CD4-positive, alpha-beta memory T cell (primary cell): ENCODE measurements at regions of chr3 and their contacts with region 1.

Region 1: DNA sequence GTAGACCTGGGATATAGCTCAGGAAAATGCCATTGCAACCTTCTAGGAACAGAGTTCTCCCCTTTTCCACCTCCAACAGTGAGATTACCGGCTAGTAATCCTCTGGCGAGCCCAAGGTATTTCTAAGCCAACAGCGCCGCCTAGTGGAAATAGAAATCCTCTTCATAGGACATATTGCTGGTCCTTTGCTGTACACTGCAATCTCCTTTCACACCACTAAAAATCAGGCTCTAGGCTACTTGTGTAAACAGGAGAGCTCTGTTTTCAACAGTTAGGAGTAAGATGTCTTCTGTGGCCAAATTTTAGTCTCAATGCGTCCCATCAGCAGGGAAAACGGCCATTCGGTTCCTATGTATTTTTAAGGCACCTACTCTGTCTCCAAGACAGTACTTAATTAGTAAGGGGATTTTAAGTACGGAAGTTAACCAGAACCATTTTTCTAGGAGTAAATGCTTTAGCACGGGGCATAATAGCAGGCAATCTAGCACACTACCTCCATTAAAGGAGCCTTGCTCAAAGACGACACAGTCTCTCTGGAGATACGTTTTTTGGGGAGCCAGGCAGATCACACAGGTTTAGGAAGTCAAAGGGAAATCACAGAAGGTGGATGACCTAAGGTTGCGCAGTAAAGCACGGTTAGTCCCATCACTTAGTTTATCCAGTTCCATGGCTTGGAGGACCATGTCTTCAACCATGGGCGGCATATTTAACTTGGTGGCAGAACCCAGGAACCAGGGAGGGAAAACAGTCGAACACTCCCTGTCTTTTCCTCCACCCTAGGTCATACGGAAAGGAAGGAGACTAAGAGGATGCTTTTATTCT is 43.8 kb downstream of the NCEH1 start:
- DNase-seq: peak; percentile 75 to 79 (median 78)
- H3K4me3 ChIP-seq: no peak overlapping the region
- H3K4me3 Mint-ChIP-seq: peak overlapping the region in 7 of 8 donors; percentile 11 to 64 (median 33)
- H3K27ac ChIP-seq: no peak overlapping the region
- H3K27ac Mint-ChIP-seq: peak overlapping the region in 4 of 7 donors; percentile 18 to 76 (median 53)
- H3K4me1 ChIP-seq: peaks cover 17% of the 10 kb centered on the region
- H3K4me1 Mint-ChIP-seq: peaks cover 10 to 31% (median 21%) of the 10 kb centered on the region in 4 donors
- H3K27me3 ChIP-seq: no peaks in the 10 kb centered on the region
- H3K27me3 Mint-ChIP-seq: peaks cover 1 to 2% of the 10 kb centered on the region in 2 donors

Region 2: GRCh38 chr3:171049861-171050444 is 1617.1 kb before region 1 on chr3:
- CTCF ChIA-PET with region 1: interaction called, 4 read pairs
- POLR2A ChIA-PET with region 1: no interaction called
- intact Hi-C with region 1: loop called (anchors 10 kb)
- DNase-seq: peak in 4 of 5 donors; percentile 17 to 37 (median 23)
- H3K4me3 ChIP-seq: no peak overlapping the region
- H3K4me3 Mint-ChIP-seq: no peak overlapping the region
- H3K27ac ChIP-seq: no peak overlapping the region
- H3K27ac Mint-ChIP-seq: no peak overlapping the region
- H3K4me1 ChIP-seq: no peaks in the 10 kb centered on the region
- H3K4me1 Mint-ChIP-seq: peaks cover 0 to 4% (median 1%) of the 10 kb centered on the region in 4 donors
- H3K27me3 ChIP-seq: no peaks in the 10 kb centered on the region
- H3K27me3 Mint-ChIP-seq: peaks cover 6 to 7% of the 10 kb centered on the region in 2 donors

Region 3: GRCh38 chr3:171772427-171773056 is 894.5 kb before region 1 on chr3:
- CTCF ChIA-PET with region 1: no interaction called
- POLR2A ChIA-PET with region 1: no interaction called
- intact Hi-C with region 1: loop called (anchors 5 kb)
- DNase-seq: peak; percentile 32 to 39 (median 36)
- H3K4me3 ChIP-seq: no peak overlapping the region
- H3K4me3 Mint-ChIP-seq: no peak overlapping the region
- H3K27ac ChIP-seq: no peak overlapping the region
- H3K27ac Mint-ChIP-seq: no peak overlapping the region
- H3K4me1 ChIP-seq: no peaks in the 10 kb centered on the region
- H3K4me1 Mint-ChIP-seq: peaks cover 0 to 6% (median 1%) of the 10 kb centered on the region in 4 donors
- H3K27me3 ChIP-seq: no peaks in the 10 kb centered on the region
- H3K27me3 Mint-ChIP-seq: peaks cover under 1 to 5% of the 10 kb centered on the region in 2 donors

Region 4: DNA sequence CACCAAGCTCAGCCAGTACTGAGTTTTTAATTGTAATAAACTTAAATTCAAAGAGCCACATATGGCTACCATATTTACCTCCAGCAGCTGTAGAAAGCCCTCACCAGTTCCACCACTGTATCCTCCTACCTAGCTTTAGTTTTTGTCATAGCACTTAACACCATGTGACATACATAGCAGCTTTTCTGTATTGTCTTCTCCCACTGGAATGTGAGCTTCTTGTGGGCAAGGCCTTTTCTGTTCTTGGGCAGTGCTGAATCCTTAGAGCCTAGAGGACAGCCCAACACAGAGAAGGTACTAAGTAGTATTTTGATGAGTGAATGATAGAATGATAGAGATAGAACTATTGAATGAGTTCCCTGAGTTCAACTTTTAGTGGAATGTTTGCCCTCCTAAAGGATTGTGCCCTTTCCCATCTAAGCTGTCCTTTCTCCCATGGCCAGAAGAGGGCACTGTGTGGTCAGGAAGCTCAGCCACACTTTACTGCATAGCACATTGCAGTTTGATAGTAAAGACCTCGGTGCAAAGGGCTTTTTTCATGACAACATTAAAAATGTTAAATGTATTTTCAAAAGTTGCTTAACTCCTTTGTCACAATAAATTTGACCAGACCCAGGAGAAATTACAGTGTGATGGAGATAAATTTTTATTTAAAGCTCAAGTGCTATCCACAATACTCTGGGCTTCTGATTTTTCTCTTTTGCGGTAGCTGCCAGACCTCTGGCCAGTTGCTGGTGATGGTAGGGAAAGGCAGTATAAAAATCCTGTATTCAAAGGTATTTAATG is 334.6 kb before region 1 on chr3:
- CTCF ChIA-PET with region 1: interaction called, 36 read pairs
- POLR2A ChIA-PET with region 1: interaction called, 5 read pairs
- intact Hi-C with region 1: loop called (anchors 1 kb)
- DNase-seq: peak; percentile 40 to 57 (median 47)
- H3K4me3 ChIP-seq: no peak overlapping the region
- H3K4me3 Mint-ChIP-seq: no peak overlapping the region
- H3K27ac ChIP-seq: no peak overlapping the region
- H3K27ac Mint-ChIP-seq: peak overlapping the region in 1 of 7 donors; percentile 15
- H3K4me1 ChIP-seq: no peaks in the 10 kb centered on the region
- H3K4me1 Mint-ChIP-seq: peaks cover 0 to 7% (median 3%) of the 10 kb centered on the region in 4 donors
- H3K27me3 ChIP-seq: no peaks in the 10 kb centered on the region
- H3K27me3 Mint-ChIP-seq: no peaks in the 10 kb centered on the region

Region 5: DNA sequence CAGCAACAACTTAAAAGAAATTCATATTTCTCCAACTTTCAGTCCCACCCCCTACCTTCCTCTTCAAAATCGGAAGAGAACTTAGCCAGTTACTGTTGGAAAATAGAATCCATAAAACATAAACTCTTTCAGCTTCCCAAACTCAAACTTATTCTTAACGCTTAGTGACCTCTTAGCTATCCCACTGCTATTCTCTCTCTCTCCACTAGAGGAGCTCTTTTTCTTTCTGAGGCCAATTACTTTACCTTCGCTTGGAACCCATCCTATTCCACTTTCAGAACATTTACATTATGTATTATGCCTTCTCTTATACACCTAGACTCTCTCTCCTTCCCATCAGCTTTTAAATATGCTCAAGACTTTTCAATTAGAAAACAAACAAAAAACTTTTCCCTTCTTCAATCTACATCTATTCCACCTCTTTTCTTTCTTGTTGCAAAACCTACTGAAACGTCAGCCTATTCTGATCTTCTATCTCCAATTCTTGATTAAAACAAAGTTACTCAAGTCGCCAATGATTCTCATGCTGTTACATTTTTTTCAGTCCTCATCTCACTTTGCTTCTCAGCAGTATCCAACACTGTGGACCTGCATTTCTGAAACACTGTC is 205.4 kb before region 1 on chr3:
- CTCF ChIA-PET with region 1: interaction called, 35 read pairs
- POLR2A ChIA-PET with region 1: no interaction called
- intact Hi-C with region 1: loop called (anchors 2 kb)
- DNase-seq: peak in 4 of 5 donors; percentile 20 to 39 (median 28)
- H3K4me3 ChIP-seq: no peak overlapping the region
- H3K4me3 Mint-ChIP-seq: no peak overlapping the region
- H3K27ac ChIP-seq: no peak overlapping the region
- H3K27ac Mint-ChIP-seq: no peak overlapping the region
- H3K4me1 ChIP-seq: no peaks in the 10 kb centered on the region
- H3K4me1 Mint-ChIP-seq: peaks cover 0 to 3% (median 1%) of the 10 kb centered on the region in 4 donors
- H3K27me3 ChIP-seq: no peaks in the 10 kb centered on the region
- H3K27me3 Mint-ChIP-seq: peaks cover 0 to 2% of the 10 kb centered on the region in 2 donors

Region 6: GRCh38 chr3:172622916-172623700 is 44.0 kb before region 1 on chr3:
- CTCF ChIA-PET with region 1: interaction called, 29 read pairs
- POLR2A ChIA-PET with region 1: no interaction called
- intact Hi-C with region 1: no loop called
- DNase-seq: peak in 4 of 5 donors; percentile 21 to 37 (median 30)
- H3K4me3 ChIP-seq: no peak overlapping the region
- H3K4me3 Mint-ChIP-seq: peak overlapping the region in 1 of 8 donors; percentile 68
- H3K27ac ChIP-seq: no peak overlapping the region
- H3K27ac Mint-ChIP-seq: no peak overlapping the region
- H3K4me1 ChIP-seq: no peaks in the 10 kb centered on the region
- H3K4me1 Mint-ChIP-seq: peaks cover 0 to 4% (median 2%) of the 10 kb centered on the region in 4 donors
- H3K27me3 ChIP-seq: no peaks in the 10 kb centered on the region
- H3K27me3 Mint-ChIP-seq: no peaks in the 10 kb centered on the region